Mammary epithelial cell (primary cell): ENCODE measurements at regions of chr20 and their contacts with region 1.

Region 1: DNA sequence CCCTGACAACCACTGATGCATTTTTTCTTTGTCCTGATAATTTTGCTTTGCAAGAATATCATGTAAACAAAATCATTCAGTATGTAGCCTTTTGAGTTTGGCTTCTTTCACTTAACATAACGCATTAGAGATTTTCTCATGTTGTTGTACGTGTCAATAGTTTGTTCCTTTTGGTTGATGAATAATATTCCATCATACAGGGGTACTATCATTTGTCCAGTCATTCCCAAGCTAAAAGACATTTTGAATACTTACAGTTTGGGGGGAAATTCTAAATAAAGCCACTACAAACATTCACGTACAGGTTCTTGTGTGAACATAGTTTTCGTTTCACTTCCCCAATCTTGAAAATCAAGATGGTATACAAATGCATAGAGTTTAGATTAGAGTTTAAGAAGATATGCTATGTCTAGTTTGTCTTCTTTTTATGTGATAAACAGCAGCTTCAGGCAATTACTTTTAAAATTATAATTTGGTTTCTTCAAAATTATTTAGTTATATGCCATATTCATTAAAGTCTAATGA is 5.2 kb downstream of the HAO1 start:
- DNase-seq: no peak
- H3K4me3 ChIP-seq: no peak overlapping the region
- H3K27ac ChIP-seq: no peak overlapping the region
- H3K4me1 ChIP-seq: peaks cover 12% of the 10 kb centered on the region
- H3K27me3 ChIP-seq: no peaks in the 10 kb centered on the region
- CTCF ChIP-seq: no peak

Region 2: GRCh38 chr20:7828437-7828836 is 106.7 kb before region 1 on chr20:
- CTCF ChIA-PET with region 1: no interaction called
- dilution Hi-C with region 1: no loop called
- in situ Hi-C with region 1: no loop called
- intact Hi-C with region 1: no loop called
- DNase-seq: no peak
- H3K4me3 ChIP-seq: no peak overlapping the region
- H3K27ac ChIP-seq: no peak overlapping the region
- H3K4me1 ChIP-seq: peaks cover 5% of the 10 kb centered on the region
- H3K27me3 ChIP-seq: no peaks in the 10 kb centered on the region
- CTCF ChIP-seq: no peak

Region 3: GRCh38 chr20:7950387-7950786 is 15.3 kb after region 1 on chr20:
- CTCF ChIA-PET with region 1: interaction called, 14 read pairs
- dilution Hi-C with region 1: no loop called
- in situ Hi-C with region 1: no loop called
- intact Hi-C with region 1: no loop called
- DNase-seq: no peak
- H3K4me3 ChIP-seq: no peak overlapping the region
- H3K27ac ChIP-seq: no peak overlapping the region
- H3K4me1 ChIP-seq: no peaks in the 10 kb centered on the region
- H3K27me3 ChIP-seq: no peaks in the 10 kb centered on the region
- CTCF ChIP-seq: no peak

Region 4: DNA sequence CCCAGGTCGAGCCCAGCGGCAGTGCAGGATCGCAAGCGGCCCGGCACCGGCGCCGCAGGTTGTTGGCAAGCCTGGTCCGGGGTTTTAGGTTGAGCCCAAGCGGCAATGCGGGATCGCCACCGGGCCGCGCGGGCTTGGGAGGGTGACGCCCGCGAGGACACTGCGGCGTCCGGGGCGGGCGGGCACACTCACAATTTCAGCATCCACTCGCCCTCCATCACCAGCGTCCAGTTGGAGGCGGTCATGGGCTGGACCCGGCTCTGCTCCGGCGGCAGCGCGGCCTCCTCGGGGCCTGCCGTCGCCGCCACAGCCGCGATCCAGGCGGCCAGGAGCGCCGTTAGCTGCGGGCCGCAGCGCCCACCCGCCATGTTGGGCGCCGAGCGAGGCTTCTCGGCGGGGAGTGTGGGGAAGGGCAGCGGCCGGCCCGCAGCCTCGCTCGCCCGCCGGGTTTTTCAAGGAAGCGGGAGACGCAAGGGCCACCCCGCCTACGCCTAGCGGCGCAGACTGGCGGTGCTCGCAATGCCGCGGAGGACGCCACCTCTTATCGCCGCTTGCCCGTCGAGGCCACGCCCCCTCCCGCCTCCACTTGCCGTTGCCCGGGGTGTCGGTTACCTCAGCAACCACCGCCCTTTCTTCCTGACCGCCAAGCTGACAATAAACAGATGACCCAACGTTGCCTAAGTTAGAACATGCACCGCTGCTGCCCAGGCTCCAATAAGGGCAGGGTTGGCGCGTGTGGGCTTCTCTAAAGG is 84.3 kb after region 1 on chr20 and contains the start of gene TMX4:
- CTCF ChIA-PET with region 1: interaction called, 7 read pairs
- dilution Hi-C with region 1: no loop called
- in situ Hi-C with region 1: no loop called
- intact Hi-C with region 1: loop called (anchors 5 kb)
- DNase-seq: peak; percentile 94
- H3K4me3 ChIP-seq: peak within 1 kb of the TSS; percentile 80 to 85 (median 85)
- H3K27ac ChIP-seq: peak within 1 kb of the TSS; percentile 84
- H3K4me1 ChIP-seq: peaks cover 17% of the 10 kb centered on the region
- H3K27me3 ChIP-seq: no peaks in the 10 kb centered on the region
- CTCF ChIP-seq: peak; percentile 4 to 39
- total RNA-seq, gene TMX4: 30.2 to 38.3 TPM

Region 5: GRCh38 chr20:8305449-8305978 is 370.4 kb after region 1 on chr20:
- CTCF ChIA-PET with region 1: no interaction called
- dilution Hi-C with region 1: no loop called
- in situ Hi-C with region 1: no loop called
- intact Hi-C with region 1: loop called (anchors 5 kb)
- DNase-seq: peak; percentile 58
- H3K4me3 ChIP-seq: no peak overlapping the region
- H3K27ac ChIP-seq: no peak overlapping the region
- H3K4me1 ChIP-seq: no peaks in the 10 kb centered on the region
- H3K27me3 ChIP-seq: no peaks in the 10 kb centered on the region
- CTCF ChIP-seq: peak; percentile 77 to 81

Region 6: DNA sequence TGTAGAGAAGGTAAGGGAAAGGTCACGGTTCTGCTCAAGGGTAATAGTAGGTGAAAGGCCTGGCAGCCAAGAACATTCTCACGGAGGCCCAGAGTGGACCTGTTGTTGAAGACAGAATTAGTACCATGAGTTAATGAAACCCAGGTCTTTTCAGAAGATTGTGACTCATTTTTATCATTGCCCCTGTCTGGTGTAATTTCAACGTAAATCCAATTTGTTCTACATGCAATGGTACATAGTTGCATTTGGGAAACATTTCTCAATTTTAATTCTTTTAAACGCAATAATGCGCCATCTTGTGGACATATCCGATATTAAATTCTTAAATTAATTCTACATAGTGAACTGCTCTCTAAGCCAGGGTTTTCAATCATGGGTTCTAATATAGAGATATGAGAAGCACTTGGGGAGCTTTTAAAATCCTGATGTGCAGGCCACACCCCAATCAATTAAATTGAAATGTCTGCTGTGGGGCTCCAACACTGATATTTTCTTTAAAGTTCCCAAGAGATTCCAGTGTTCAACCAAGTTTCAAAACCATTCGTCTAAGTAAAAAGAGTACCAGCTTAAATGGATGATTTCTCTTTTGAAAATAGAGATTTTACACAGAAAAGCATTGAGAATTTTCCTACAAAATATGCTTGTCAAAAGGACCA is 454.4 kb after region 1 on chr20:
- CTCF ChIA-PET with region 1: no interaction called
- dilution Hi-C with region 1: no loop called
- in situ Hi-C with region 1: no loop called
- intact Hi-C with region 1: loop called (anchors 5 kb)
- DNase-seq: peak; percentile 9
- H3K4me3 ChIP-seq: no peak overlapping the region
- H3K27ac ChIP-seq: no peak overlapping the region
- H3K4me1 ChIP-seq: no peaks in the 10 kb centered on the region
- H3K27me3 ChIP-seq: no peaks in the 10 kb centered on the region
- CTCF ChIP-seq: peak; percentile 35 to 40